Right cardiac atrium (tissue), 5 donors: ENCODE measurements at regions of chr2 and their contacts with region 1.

Region 1: DNA sequence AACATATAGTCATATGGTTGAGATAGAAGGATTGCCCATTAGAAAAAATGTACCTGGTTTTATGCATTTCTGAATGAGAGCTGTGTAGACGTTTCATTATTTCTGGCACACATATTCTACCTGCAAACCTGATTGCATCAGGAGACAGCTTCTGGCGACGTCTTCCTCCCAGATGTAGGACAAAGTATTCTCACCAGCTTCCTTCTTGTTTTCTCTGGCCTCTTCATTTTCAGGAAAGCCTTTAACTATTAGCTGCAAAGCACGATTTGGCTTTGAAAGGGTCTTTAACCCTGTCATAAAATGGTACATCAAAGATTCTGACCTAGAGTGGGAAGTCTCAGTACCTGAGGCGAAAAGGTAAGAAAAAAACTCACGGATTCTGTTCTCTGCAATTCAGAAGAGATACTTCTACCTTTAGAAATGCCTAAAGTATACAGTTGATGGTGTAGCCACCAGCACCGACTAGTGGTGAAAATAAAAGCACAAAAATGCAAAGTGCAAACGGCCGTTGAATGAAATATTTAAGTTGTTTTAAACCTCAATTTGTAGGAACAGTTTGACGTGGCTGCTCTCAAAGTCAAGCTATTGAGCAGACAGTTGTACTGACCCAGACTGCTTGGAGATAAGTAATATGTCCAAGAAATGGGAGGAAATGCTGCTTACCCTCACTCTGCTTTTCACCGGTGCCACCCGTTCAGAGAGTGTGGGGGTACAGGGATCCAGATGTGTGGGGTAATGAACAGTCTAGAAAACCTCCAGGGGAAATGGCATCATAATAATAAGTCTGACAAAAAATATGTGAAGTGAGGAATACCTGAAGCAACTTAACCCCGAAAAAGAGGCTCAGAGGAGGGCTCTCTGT is 20.2 kb downstream of the IL18RAP start:
- DNase-seq: no peak
- ATAC-seq: peak in 1 of 2 donors; percentile 58
- H3K4me3 ChIP-seq: no peak overlapping the region
- H3K27ac ChIP-seq: no peak overlapping the region
- H3K4me1 ChIP-seq: no peaks in the 10 kb centered on the region
- H3K27me3 ChIP-seq: no peaks in the 10 kb centered on the region

Region 2: DNA sequence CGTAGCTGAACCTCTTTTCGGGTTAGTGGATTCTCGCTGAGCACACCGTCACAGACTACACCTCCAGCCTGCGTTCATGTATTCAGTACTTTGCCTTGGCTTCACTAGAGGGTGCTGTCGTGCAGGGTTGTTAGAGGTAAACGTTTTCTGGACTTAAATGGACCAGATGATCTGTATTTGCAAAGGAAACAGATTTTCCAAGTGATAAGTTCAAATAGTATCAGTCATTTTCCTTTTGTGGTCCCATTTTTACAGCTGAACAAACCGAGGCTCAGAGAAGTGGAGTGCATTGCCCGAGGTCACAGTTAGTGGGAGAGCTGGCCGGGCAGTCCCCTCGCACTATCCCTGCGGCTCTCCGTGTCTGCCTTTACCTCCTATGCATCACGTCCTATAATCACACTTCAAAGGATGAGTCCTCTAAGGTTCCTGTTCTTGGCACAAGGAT is 619.8 kb before region 1 on chr2:
- intact Hi-C with region 1: no loop called
- DNase-seq: peak in 2 of 3 donors; percentile 47 to 57
- ATAC-seq: peak; percentile 65 to 70
- H3K4me3 ChIP-seq: no peak overlapping the region
- H3K27ac ChIP-seq: no peak overlapping the region
- H3K4me1 ChIP-seq: peaks cover 9% of the 10 kb centered on the region
- H3K27me3 ChIP-seq: no peaks in the 10 kb centered on the region

Region 3: GRCh38 chr2:102187496-102188150 is 255.6 kb before region 1 on chr2:
- intact Hi-C with region 1: loop called in 1 of 4 experiments (anchors 10 kb)
- DNase-seq: peak; percentile 65 to 87 (median 79)
- ATAC-seq: peak; percentile 88 to 89
- H3K4me3 ChIP-seq: peak overlapping the region; percentile 44
- H3K27ac ChIP-seq: peak overlapping the region; percentile 20
- H3K4me1 ChIP-seq: no peaks in the 10 kb centered on the region
- H3K27me3 ChIP-seq: no peaks in the 10 kb centered on the region

Region 4: GRCh38 chr2:102240640-102241370 is 202.4 kb before region 1 on chr2:
- intact Hi-C with region 1: loop called in 1 of 4 experiments (anchors 10 kb)
- DNase-seq: peak; percentile 94 to 96 (median 96)
- ATAC-seq: peak; percentile 94
- H3K4me3 ChIP-seq: no peak overlapping the region
- H3K27ac ChIP-seq: peak overlapping the region; percentile 63
- H3K4me1 ChIP-seq: no peaks in the 10 kb centered on the region
- H3K27me3 ChIP-seq: no peaks in the 10 kb centered on the region

Region 5: DNA sequence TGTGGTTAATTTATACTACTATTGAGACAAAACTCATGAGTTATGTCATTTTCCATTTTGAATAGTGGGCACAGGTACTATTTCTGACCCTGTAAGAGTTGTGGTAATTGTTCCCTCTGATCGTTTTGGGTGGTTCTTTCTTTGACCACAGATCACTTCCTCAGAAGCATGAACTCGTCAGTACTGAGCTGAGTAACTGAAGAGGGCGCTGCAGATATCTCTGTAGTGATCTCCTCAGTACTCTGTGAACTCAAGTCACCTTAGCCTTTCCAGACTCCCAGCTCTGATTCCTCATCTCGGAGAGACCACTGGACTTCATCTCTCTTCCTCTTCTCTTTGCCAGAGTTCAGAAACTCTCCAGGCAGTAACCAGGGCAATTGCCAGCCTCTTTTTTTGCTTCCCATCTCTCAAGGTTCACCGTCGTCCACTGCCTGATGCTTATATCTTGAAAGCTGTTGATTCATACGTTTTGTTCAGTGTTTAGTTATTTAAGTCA is 141.3 kb before region 1 on chr2:
- intact Hi-C with region 1: no loop called
- DNase-seq: no peak
- ATAC-seq: peak; percentile 66 to 83
- H3K4me3 ChIP-seq: no peak overlapping the region
- H3K27ac ChIP-seq: no peak overlapping the region
- H3K4me1 ChIP-seq: peaks cover 2% of the 10 kb centered on the region
- H3K27me3 ChIP-seq: no peaks in the 10 kb centered on the region